Activated CD8-positive, alpha-beta memory T cell treated with anti-CD3 and anti-CD28 coated beads, Interleukin-2, amount 10 ng/mL, durations not matched to agents 7 days and 5 days (primary cell): ENCODE measurements at regions of chr7 and their contacts with region 1.

Region 1: GRCh38 chr7:33040803-33041516 is 21.6 kb downstream of the NT5C3A start:
- DNase-seq: peak; percentile 84
- ATAC-seq: peak; percentile 98
- H3K4me3 Mint-ChIP-seq: peak overlapping the region; percentile 80
- H3K27ac Mint-ChIP-seq: peak overlapping the region; percentile 83
- H3K4me1 Mint-ChIP-seq: peaks cover 42% of the 10 kb centered on the region
- H3K27me3 Mint-ChIP-seq: no peaks in the 10 kb centered on the region

Region 2: GRCh38 chr7:33024189-33024757 is 16.7 kb before region 1 on chr7:
- CTCF ChIA-PET with region 1: interaction called, 11 read pairs
- DNase-seq: no peak
- ATAC-seq: no peak
- H3K4me3 Mint-ChIP-seq: no peak overlapping the region
- H3K27ac Mint-ChIP-seq: peak overlapping the region; percentile 4
- H3K4me1 Mint-ChIP-seq: peaks cover 2% of the 10 kb centered on the region
- H3K27me3 Mint-ChIP-seq: no peaks in the 10 kb centered on the region

Region 3: GRCh38 chr7:33062782-33063443 is 22.0 kb after region 1 on chr7:
- CTCF ChIA-PET with region 1: interaction called, 13 read pairs
- DNase-seq: peak; percentile 96
- ATAC-seq: peak; percentile 94
- H3K4me3 Mint-ChIP-seq: peak overlapping the region; percentile 96
- H3K27ac Mint-ChIP-seq: peak overlapping the region; percentile 86
- H3K4me1 Mint-ChIP-seq: peaks cover 34% of the 10 kb centered on the region
- H3K27me3 Mint-ChIP-seq: peaks cover 8% of the 10 kb centered on the region